ENCODE measurements at regions of chr22 and their contacts with region 1.

Region 1: DNA sequence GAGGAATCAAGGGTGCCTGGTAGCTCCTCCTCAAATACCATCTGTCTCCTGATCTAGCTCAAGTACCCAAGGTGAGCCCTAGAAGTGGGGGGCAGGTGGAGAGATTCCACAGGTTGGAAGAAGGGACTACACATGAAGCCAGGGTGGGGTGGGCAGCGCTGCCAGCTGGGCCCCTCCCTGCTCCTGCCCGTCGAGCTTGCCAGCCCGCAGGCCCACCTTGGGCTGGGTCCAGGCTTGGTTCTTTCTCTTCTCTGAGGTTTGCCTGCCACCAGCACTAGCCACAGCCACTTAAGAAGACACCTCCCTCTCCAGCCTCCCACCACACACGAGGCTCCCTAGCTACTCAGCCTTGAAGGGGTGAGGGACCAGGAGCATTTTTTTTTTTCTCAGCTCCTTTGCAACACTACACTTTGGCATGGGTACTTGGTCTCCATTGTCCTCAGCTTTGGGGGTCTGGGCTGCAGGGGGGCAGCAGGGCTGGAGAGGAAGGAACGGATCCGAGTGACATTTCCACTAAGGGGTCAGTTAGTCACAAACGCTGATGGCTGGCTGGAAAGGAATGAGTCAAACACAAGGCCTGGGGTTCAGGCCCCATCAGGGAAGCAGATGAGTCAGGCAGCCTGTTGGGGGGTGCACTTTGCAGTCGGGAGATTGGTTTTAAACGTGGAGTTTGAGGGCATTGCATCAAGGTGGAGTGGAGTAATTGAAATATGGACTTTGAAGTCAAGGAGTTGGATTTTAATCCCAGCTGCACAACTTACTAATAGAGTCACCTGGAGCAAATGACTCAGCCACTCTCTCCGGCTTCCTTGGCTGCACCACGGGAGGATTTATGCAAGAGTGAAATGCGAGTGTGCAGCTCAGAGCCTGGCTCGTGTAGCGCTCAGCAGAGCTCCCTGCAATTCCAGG is 7.4 kb upstream of the NPTXR start:
- DNase-seq: no peak
- H3K4me3 ChIP-seq: no peak overlapping the region
- CTCF ChIP-seq: no peak

Region 2: GRCh38 chr22:38684895-38685294 is 166.3 kb before region 1 on chr22:
- CTCF ChIA-PET with region 1: no interaction called
- POLR2A ChIA-PET with region 1: no interaction called
- DNase-seq: no peak
- H3K4me3 ChIP-seq: no peak overlapping the region
- CTCF ChIP-seq: no peak

Region 3: DNA sequence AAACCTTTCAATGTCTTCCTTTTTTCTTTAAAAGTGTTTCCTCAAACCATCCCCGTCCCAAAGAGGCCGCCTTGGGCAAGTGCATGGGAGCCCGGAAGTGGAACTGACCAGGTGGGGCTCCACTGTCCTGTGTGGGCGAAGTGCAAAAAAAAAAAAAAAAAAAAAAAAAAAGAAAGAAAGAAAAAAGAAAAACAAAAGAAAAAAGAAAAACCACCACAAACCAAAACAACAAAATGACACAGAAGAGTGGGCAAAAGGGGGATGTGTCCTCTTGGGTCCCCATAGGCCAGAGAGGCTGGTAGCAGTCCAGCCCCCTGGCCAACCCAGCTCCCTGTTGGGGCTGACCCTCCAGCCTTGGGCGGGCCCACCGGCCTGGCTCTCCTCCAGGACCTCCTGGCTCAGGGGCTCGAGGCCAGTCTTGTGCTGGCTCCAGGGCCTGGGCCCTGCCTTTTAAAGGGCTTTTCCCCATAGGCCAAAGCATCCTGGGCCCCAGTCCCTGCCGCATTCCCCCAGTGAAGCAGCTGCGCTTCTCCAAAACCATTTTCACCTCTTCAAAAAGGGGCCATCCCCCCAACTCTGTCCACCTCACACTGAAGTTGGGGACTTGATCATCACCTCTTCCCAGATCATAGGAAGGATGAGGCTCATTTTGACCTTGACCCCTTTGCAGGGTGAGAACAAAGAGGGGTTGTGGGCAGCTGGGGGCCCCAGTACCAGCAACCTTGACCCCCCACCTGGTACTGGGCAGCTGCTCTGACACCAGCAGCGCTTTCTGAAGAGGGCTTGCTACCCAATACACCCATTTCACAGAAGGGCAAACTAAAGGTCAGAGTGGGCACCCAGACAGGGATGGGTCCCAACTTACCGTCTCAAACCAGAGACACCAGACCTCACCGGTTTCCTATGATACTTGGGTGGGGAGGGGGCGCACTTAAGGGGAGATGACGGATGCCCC is 11.5 kb after region 1 on chr22:
- CTCF ChIA-PET with region 1: interaction called, 216 read pairs
- POLR2A ChIA-PET with region 1: interaction called, 5 read pairs
- DNase-seq: no peak
- H3K4me3 ChIP-seq: no peak overlapping the region
- CTCF ChIP-seq: no peak